HAP-1 (cell line): ENCODE measurements at regions of chr2 and their contacts with region 1.

Region 1: DNA sequence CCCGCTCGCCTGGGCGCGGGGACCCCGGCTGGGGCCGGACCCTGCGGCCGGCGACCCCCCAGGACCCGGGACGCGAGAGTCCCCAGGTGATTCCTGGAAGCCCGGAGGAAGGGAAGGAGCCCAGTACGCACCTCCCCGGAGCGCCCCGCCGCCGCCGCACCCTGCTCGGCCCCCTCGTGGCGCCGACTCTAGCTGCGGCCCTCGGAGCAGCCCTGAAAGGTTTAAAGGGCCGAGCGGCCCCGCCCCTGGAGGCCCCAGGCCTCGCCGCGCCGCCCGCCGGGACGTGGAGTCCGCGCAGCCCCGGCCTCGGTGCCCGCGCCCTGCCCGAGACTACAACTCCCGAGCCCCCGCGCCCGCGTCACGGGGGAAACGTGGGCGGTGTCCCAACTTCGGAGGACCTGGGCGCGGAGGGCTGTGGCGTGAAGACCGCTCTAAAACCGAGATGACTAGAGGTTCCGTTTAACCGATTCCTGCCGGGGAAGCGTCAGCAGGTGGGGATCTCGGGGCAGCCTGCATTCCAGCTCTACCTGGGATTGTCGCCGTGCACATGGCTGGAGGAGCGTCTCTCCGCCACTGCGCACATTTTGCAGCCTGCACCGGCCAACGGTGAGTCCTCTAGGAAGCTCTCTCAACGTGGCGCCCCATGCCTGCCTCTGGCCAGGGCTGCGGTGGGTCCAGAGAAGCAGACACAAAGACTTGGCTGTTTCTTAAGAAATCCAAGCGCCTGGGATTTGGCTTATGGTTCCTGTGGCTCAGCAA is at the start of gene TMEM150A:
- DNase-seq: peak; percentile 87 to 93
- H3K4me3 ChIP-seq: peak within 1 kb of the TSS; percentile 71
- H3K4me1 ChIP-seq: peaks cover 19% of the 10 kb centered on the region
- H3K27me3 ChIP-seq: no peaks in the 10 kb centered on the region

Region 2: GRCh38 chr2:85327822-85328617 is 274.6 kb before region 1 on chr2 and contains the start of gene TGOLN2:
- in situ Hi-C with region 1: no loop called
- DNase-seq: peak; percentile 91 to 95
- H3K4me3 ChIP-seq: peak within 1 kb of the TSS; percentile 69
- H3K4me1 ChIP-seq: peaks cover 15% of the 10 kb centered on the region
- H3K27me3 ChIP-seq: no peaks in the 10 kb centered on the region

Region 3: GRCh38 chr2:85561317-85561979 is 41.2 kb before region 1 on chr2 and contains the start of gene GGCX:
- in situ Hi-C with region 1: loop called (anchors 5 kb)
- DNase-seq: peak; percentile 96 to 97
- H3K4me3 ChIP-seq: peak within 1 kb of the TSS; percentile 74
- H3K4me1 ChIP-seq: peaks cover 7% of the 10 kb centered on the region
- H3K27me3 ChIP-seq: no peaks in the 10 kb centered on the region